ENCODE measurements at regions of chr6 and their contacts with region 1.

Region 1: GRCh38 chr6:33391278-33391921 is at the start of gene KIFC1:
- DNase-seq: peak; percentile 100
- ATAC-seq: peak; percentile 90
- H3K4me3 Mint-ChIP-seq: peak within 1 kb of the TSS; percentile 88
- H3K27ac Mint-ChIP-seq: peak within 1 kb of the TSS; percentile 96
- H3K4me1 Mint-ChIP-seq: peaks cover 37% of the 10 kb centered on the region
- H3K27me3 Mint-ChIP-seq: no peaks in the 10 kb centered on the region
- total RNA-seq, gene KIFC1: 86.0 to 89.3 TPM

Region 2: GRCh38 chr6:33271458-33272274 is 119.7 kb before region 1 on chr6 and contains the starts of genes RPS18 and VPS52:
- CTCF ChIA-PET with region 1: interaction called, 6 read pairs
- POLR2A ChIA-PET with region 1: interaction called, 5 read pairs
- intact Hi-C with region 1: loop called in 1 of 2 experiments (anchors 1 kb)
- DNase-seq: peak; percentile 94
- ATAC-seq: peak; percentile 92
- H3K4me3 Mint-ChIP-seq: peak within 1 kb of the TSS; percentile 91
- H3K27ac Mint-ChIP-seq: peak within 1 kb of the TSS; percentile 100
- H3K4me1 Mint-ChIP-seq: peaks cover 47% of the 10 kb centered on the region
- H3K27me3 Mint-ChIP-seq: no peaks in the 10 kb centered on the region
- total RNA-seq, gene RPS18: 2,706 to 4,631 TPM
- total RNA-seq, gene VPS52: 35.6 to 45.2 TPM

Region 3: DNA sequence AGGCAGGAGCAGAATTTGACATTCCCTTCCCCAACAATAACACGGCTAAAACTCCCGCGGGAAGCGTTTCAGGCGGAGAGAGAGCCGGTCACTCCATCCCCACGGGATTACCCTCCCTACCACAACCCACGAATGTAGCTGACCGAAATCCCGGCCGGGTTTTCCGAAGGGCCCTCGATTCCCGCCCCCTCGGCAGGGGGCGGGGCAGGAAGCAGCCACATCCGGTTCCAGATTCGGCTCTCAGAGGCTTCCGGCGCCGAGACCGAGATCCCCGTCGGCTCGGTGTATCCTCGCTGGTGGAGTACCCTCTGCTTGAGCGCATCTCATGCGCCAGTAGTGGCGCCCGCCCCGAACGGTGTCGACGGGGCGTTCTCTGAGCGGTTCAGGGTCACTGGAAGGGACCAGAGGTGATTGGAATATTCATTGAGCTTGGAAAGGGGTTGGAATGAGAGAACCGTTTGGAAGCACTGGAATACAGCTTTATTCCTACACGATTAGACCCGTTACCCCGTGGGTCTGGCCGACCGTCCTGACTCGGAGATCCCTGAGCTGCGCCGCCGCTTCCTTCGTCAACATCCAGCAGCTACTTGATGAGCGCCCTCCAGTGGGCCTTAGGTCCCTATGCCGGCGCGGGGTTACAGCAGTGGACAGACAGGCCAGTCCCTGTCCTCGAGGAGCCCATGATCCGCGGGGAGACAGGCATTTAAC is 92.0 kb before region 1 on chr6:
- CTCF ChIA-PET with region 1: no interaction called
- POLR2A ChIA-PET with region 1: no interaction called
- intact Hi-C with region 1: loop called in 1 of 2 experiments (anchors 1 kb)
- DNase-seq: peak; percentile 97
- ATAC-seq: peak; percentile 87
- H3K4me3 Mint-ChIP-seq: peak overlapping the region; percentile 80
- H3K27ac Mint-ChIP-seq: peak overlapping the region; percentile 98
- H3K4me1 Mint-ChIP-seq: peaks cover 28% of the 10 kb centered on the region
- H3K27me3 Mint-ChIP-seq: no peaks in the 10 kb centered on the region

Region 4: GRCh38 chr6:33344701-33345697 is 46.4 kb before region 1 on chr6:
- CTCF ChIA-PET with region 1: no interaction called
- POLR2A ChIA-PET with region 1: no interaction called
- intact Hi-C with region 1: loop called in 1 of 2 experiments (anchors 1 kb)
- DNase-seq: peak; percentile 79
- ATAC-seq: peak; percentile 54
- H3K4me3 Mint-ChIP-seq: peak overlapping the region; percentile 56
- H3K27ac Mint-ChIP-seq: peak overlapping the region; percentile 78
- H3K4me1 Mint-ChIP-seq: peaks cover 21% of the 10 kb centered on the region
- H3K27me3 Mint-ChIP-seq: no peaks in the 10 kb centered on the region

Region 5: GRCh38 chr6:33425668-33426577 is 34.5 kb after region 1 on chr6:
- CTCF ChIA-PET with region 1: interaction called, 11 read pairs
- POLR2A ChIA-PET with region 1: interaction called, 7 read pairs
- intact Hi-C with region 1: loop called (anchors 1 to 2 kb)
- DNase-seq: peak; percentile 93
- ATAC-seq: peak; percentile 49
- H3K4me3 Mint-ChIP-seq: peak overlapping the region; percentile 88
- H3K27ac Mint-ChIP-seq: peak overlapping the region; percentile 90
- H3K4me1 Mint-ChIP-seq: peaks cover 65% of the 10 kb centered on the region
- H3K27me3 Mint-ChIP-seq: no peaks in the 10 kb centered on the region

Region 6: DNA sequence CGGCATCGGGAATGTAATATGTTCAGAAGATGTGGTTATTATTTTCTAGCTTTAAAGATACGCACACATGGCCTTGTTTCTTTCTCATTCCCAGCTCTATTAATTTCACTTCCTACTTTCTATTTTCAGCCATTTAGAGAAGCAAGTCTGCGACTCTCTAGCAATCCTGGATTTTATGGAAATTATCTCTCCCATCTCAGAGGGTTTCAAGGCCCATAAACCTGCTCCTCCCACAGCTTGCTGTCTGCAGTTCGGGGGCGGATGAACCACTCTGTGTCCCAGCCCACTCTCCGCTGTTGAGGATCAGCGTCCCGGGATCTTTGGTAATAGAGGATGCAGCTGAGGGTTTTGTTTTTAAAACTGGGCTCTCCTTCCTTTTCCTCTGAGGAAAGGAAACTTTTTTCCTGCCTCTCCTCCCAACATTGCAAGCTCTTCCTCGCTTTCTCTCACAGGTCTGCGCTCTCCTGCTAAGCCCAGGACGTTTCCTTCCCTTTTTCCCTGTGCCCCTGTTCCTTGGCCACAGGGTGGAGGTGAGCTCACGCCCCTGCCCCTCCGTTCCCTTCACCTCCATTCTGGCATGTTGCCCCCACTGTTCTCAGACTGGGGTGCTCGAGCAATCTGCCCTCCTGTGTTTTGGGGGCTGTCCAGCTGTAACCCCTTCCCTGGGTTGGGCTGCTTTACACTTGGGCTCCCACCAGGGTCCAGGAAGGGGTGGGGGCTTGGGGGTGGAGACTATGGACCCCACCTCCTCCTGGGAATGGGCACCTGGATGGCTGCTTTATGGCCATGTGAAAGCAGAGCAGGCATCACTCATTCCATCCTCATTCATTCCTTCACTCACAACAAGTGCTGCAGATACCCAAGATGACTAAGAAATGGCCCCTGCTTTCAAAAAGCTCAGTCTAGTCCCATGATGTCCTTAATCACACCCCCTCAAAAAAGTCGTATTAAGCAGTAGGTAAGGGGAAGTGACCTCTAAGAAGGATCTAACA is 117.8 kb after region 1 on chr6:
- CTCF ChIA-PET with region 1: no interaction called
- POLR2A ChIA-PET with region 1: no interaction called
- intact Hi-C with region 1: no loop called
- DNase-seq: no peak
- ATAC-seq: no peak
- H3K4me3 Mint-ChIP-seq: no peak overlapping the region
- H3K27ac Mint-ChIP-seq: no peak overlapping the region
- H3K4me1 Mint-ChIP-seq: peaks cover 7% of the 10 kb centered on the region
- H3K27me3 Mint-ChIP-seq: peaks cover 10% of the 10 kb centered on the region

Region 7: DNA sequence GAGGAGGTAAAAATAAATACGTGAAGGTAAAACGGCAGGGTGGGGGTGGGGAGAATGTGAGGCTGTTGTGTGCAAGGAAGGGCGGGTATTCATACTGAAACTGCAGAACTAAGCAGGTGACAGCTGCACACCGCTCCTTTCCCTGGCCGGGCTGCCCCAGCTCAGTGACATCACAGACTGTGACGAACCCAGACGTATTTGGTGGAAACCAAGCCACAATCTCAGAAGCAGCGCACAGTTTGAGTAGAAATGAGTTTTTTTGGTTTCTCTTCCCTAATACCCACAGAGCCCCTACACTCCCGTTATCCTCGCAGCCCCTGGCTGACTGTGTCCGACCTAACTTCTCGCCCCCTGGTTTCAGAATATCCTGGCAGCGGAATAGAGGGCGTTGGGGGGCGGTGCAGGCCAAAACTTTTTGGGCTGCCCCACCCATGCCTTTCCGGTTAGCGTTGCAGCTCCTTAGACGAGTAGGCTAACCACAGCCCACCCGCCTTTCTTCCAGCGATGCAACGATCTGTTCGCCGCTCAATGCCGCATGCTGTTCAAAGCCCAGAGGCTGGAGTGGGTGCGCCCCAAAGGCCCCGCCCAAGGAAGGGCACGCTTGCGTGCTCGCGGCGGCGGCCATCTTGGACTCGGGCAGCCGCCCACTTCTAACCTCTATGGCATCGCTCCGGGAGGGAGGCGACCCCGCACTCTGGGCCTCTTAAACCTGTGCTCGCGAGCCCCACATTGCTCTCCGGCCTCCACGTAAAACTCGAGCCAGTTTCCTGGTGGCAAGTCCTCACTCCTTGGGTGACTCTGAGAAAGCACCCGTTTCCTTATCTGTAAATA is 179.6 kb after region 1 on chr6:
- CTCF ChIA-PET with region 1: interaction called, 3 read pairs
- POLR2A ChIA-PET with region 1: no interaction called
- intact Hi-C with region 1: loop called (anchors 1 kb)
- DNase-seq: peak; percentile 98
- ATAC-seq: peak; percentile 90
- H3K4me3 Mint-ChIP-seq: peak overlapping the region; percentile 81
- H3K27ac Mint-ChIP-seq: peak overlapping the region; percentile 100
- H3K4me1 Mint-ChIP-seq: peaks cover 42% of the 10 kb centered on the region
- H3K27me3 Mint-ChIP-seq: no peaks in the 10 kb centered on the region

Region 8: DNA sequence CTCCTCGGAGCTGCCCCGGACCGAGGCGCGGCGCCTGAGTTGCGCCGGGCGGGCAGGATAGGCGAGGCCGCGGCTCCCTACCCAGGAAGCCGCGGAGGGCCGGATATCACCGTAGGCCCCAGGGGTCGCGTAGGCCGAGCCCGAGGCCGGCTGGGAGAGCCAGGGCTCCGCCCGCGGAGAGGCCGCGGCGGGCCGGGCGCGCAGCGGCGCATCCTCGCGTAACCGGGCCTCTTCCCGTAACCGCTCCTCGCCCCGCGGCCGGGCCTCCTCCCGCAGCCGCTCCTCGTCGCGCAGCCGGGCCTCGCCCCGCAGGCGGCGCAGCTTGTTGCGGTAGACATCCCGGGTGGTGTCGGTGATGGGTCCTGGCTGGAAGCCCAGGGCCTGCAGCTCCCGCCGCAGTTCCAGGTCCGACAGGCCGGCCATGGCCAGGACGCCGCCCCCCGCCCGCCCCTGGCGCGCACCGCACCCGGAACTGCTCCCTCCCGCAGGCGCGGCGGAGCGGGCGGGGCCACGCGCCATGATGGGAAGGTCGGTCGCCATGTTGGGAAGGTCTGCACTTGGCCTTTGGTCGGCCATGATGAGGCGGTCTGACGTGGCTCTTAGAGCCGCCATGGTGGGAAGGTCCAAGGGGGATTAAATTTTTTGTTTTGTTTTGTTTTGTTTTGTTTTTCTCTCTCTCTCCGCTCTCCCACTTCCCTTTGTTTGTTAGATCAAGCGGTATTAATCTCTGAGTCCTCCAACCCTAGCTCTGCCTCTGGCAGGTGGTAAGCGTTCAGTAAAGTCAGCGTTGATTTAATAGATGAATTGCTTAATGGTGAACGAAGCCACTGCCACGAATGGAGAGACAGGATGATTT is 397.5 kb after region 1 on chr6 and contains the start of gene LEMD2:
- CTCF ChIA-PET with region 1: no interaction called
- POLR2A ChIA-PET with region 1: no interaction called
- intact Hi-C with region 1: loop called in 1 of 2 experiments (anchors 1 kb)
- DNase-seq: peak; percentile 93
- ATAC-seq: peak; percentile 87
- H3K4me3 Mint-ChIP-seq: peak within 1 kb of the TSS; percentile 96
- H3K27ac Mint-ChIP-seq: peak within 1 kb of the TSS; percentile 99
- H3K4me1 Mint-ChIP-seq: peaks cover 47% of the 10 kb centered on the region
- H3K27me3 Mint-ChIP-seq: no peaks in the 10 kb centered on the region
- total RNA-seq, gene LEMD2: 55.2 to 61.5 TPM

Measured in activated CD4-positive, alpha-beta T cell treated with anti-CD3 and anti-CD28 coated beads for 36 hours (primary cell).